Activated CD8-positive, alpha-beta T cell treated with anti-CD3 and anti-CD28 coated beads for 36 hours (primary cell): ENCODE measurements at regions of chr3 and their contacts with region 1.

Region 1: GRCh38 chr3:184335661-184336546 is 1.5 kb upstream of the FAM131A start:
- DNase-seq: peak; percentile 87
- ATAC-seq: peak; percentile 45
- H3K4me3 Mint-ChIP-seq: peak overlapping the region; percentile 82
- H3K27ac Mint-ChIP-seq: peak overlapping the region; percentile 89
- H3K4me1 Mint-ChIP-seq: peaks cover 66% of the 10 kb centered on the region
- H3K27me3 Mint-ChIP-seq: no peaks in the 10 kb centered on the region
- CTCF ChIP-seq: no peak

Region 2: GRCh38 chr3:184289426-184289938 is 46.4 kb before region 1 on chr3:
- CTCF ChIA-PET with region 1: no interaction called
- POLR2A ChIA-PET with region 1: no interaction called
- intact Hi-C with region 1: no loop called
- DNase-seq: peak; percentile 80
- ATAC-seq: peak; percentile 85
- H3K4me3 Mint-ChIP-seq: no peak overlapping the region
- H3K27ac Mint-ChIP-seq: no peak overlapping the region
- H3K4me1 Mint-ChIP-seq: no peaks in the 10 kb centered on the region
- H3K27me3 Mint-ChIP-seq: peaks cover 8% of the 10 kb centered on the region
- CTCF ChIP-seq: peak; percentile 78

Region 3: DNA sequence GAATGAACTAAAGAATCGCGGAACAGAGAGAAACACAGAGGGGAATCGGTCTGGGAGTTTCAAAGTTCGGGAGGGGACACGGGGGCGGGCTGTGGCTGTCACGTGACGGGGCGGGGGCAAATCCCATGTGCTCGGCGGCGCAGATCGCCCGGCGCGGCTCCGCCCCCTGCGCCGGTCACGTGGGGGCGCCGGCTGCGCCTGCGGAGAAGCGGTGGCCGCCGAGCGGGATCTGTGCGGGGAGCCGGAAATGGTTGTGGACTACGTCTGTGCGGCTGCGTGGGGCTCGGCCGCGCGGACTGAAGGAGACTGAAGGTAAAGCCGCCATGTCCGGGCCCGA is 21.6 kb before region 1 on chr3 and contains the start of gene EIF4G1:
- CTCF ChIA-PET with region 1: no interaction called
- POLR2A ChIA-PET with region 1: interaction called, 45 read pairs
- intact Hi-C with region 1: loop called (anchors 2 kb)
- DNase-seq: peak; percentile 95
- ATAC-seq: peak; percentile 91
- H3K4me3 Mint-ChIP-seq: peak within 1 kb of the TSS; percentile 85
- H3K27ac Mint-ChIP-seq: peak within 1 kb of the TSS; percentile 92
- H3K4me1 Mint-ChIP-seq: peaks cover 27% of the 10 kb centered on the region
- H3K27me3 Mint-ChIP-seq: no peaks in the 10 kb centered on the region
- CTCF ChIP-seq: no peak
- total RNA-seq, gene EIF4G1: 429 to 437 TPM

Region 4: GRCh38 chr3:184320099-184320445 is 15.8 kb before region 1 on chr3:
- CTCF ChIA-PET with region 1: no interaction called
- POLR2A ChIA-PET with region 1: interaction called, 45 read pairs
- intact Hi-C with region 1: loop called (anchors 2 kb)
- DNase-seq: peak; percentile 62
- ATAC-seq: peak; percentile 67
- H3K4me3 Mint-ChIP-seq: no peak overlapping the region
- H3K27ac Mint-ChIP-seq: peak overlapping the region; percentile 23
- H3K4me1 Mint-ChIP-seq: peaks cover 47% of the 10 kb centered on the region
- H3K27me3 Mint-ChIP-seq: no peaks in the 10 kb centered on the region
- CTCF ChIP-seq: no peak

Region 5: DNA sequence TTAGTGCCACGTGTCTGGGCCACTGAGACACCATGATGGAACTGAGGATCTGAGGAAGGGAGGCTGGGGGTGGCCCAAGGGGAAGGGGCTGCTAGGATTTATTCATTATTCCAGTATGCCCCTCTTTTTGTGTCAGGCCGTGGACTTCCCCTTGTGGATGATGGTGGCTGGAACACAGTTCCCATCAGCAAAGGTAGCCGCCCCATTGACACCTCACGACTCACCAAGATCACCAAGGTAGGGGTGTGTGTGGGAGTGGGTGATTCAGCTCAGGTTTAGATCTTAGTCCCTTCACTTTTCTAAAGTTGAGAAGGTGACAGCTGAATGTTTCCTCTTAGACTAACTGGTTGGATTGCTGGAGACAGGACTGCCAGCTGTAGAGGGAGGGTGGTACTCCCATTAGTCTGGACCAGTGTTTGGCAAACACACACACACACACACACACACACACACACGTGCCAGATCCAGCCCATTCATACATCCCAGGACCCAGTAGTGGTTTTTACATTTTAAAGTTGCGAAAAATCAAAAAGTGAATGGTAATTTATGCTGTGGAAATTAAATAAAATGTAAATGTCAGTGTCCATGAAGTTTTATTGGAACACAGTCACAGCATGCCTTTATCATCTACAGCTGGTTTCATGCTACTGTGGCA is 10.1 kb before region 1 on chr3:
- CTCF ChIA-PET with region 1: interaction called, 3 read pairs
- POLR2A ChIA-PET with region 1: interaction called, 45 read pairs
- intact Hi-C with region 1: no loop called
- DNase-seq: peak; percentile 51
- ATAC-seq: peak; percentile 85
- H3K4me3 Mint-ChIP-seq: no peak overlapping the region
- H3K27ac Mint-ChIP-seq: peak overlapping the region; percentile 78
- H3K4me1 Mint-ChIP-seq: peaks cover 32% of the 10 kb centered on the region
- H3K27me3 Mint-ChIP-seq: no peaks in the 10 kb centered on the region
- CTCF ChIP-seq: no peak

Region 6: GRCh38 chr3:184354121-184354728 is 18.3 kb after region 1 on chr3:
- CTCF ChIA-PET with region 1: interaction called, 25 read pairs
- POLR2A ChIA-PET with region 1: interaction called, 8 read pairs
- intact Hi-C with region 1: no loop called
- DNase-seq: peak; percentile 82
- ATAC-seq: peak; percentile 89
- H3K4me3 Mint-ChIP-seq: no peak overlapping the region
- H3K27ac Mint-ChIP-seq: peak overlapping the region; percentile 11
- H3K4me1 Mint-ChIP-seq: peaks cover 4% of the 10 kb centered on the region
- H3K27me3 Mint-ChIP-seq: no peaks in the 10 kb centered on the region
- CTCF ChIP-seq: peak; percentile 76